HAP-1 (cell line): ENCODE measurements at regions of chr11 and their contacts with region 1.

Region 1: GRCh38 chr11:108664730-108665525 is at the start of gene DDX10:
- DNase-seq: peak; percentile 95 to 98
- H3K4me3 ChIP-seq: peak within 1 kb of the TSS; percentile 67
- H3K4me1 ChIP-seq: peaks cover 29% of the 10 kb centered on the region
- H3K27me3 ChIP-seq: no peaks in the 10 kb centered on the region

Region 2: GRCh38 chr11:108008656-108009496 is 656.1 kb before region 1 on chr11 and contains the start of gene CUL5:
- in situ Hi-C with region 1: loop called (anchors 25 kb)
- DNase-seq: peak; percentile 83 to 95
- H3K4me3 ChIP-seq: peak within 1 kb of the TSS; percentile 92
- H3K4me1 ChIP-seq: peaks cover 16% of the 10 kb centered on the region
- H3K27me3 ChIP-seq: no peaks in the 10 kb centered on the region

Region 3: DNA sequence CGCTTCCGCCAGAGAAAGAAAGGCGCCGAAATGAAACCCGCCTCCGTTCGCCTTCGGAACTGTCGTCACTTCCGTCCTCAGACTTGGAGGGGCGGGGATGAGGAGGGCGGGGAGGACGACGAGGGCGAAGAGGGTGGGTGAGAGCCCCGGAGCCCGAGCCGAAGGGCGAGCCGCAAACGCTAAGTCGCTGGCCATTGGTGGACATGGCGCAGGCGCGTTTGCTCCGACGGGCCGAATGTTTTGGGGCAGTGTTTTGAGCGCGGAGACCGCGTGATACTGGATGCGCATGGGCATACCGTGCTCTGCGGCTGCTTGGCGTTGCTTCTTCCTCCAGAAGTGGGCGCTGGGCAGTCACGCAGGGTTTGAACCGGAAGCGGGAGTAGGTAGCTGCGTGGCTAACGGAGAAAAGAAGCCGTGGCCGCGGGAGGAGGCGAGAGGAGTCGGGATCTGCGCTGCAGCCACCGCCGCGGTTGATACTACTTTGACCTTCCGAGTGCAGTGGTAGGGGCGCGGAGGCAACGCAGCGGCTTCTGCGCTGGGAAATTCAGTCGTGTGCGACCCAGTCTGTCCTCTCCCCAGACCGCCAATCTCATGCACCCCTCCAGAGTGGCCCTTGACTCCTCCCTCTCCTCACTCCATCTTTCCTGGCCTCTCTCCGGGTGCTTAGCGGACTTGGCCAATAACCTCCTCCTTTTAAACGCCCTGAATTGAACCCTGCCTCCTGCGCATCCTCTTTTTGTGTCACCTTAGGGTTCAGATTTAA is 442.1 kb before region 1 on chr11 and contains the start of gene ATM:
- in situ Hi-C with region 1: loop called (anchors 25 kb)
- DNase-seq: peak; percentile 98 to 99
- H3K4me3 ChIP-seq: peak within 1 kb of the TSS; percentile 69
- H3K4me1 ChIP-seq: peaks cover 25% of the 10 kb centered on the region
- H3K27me3 ChIP-seq: no peaks in the 10 kb centered on the region

Region 4: GRCh38 chr11:108340970-108341369 is 324.0 kb before region 1 on chr11:
- in situ Hi-C with region 1: loop called (anchors 25 kb)
- DNase-seq: no peak
- H3K4me3 ChIP-seq: no peak overlapping the region
- H3K4me1 ChIP-seq: peaks cover 18% of the 10 kb centered on the region
- H3K27me3 ChIP-seq: no peaks in the 10 kb centered on the region